Right lobe of liver (tissue), 6 donors: ENCODE measurements at regions of chr17 and their contacts with region 1.

Region 1: GRCh38 chr17:19554377-19554776 is 20.7 kb downstream of the SLC47A1 start:
- DNase-seq: no peak
- ATAC-seq: peak in 2 of 4 donors; percentile 4 to 23
- H3K4me3 ChIP-seq: no peak overlapping the region
- H3K27ac ChIP-seq: peak overlapping the region; percentile 50 to 100 (median 63)
- H3K4me1 ChIP-seq: peaks cover 0 to 43% (median 15%) of the 10 kb centered on the region in 4 donors
- H3K27me3 ChIP-seq: no peaks in the 10 kb centered on the region
- CTCF ChIP-seq: no peak
- POLR2A ChIP-seq: no peak

Region 2: DNA sequence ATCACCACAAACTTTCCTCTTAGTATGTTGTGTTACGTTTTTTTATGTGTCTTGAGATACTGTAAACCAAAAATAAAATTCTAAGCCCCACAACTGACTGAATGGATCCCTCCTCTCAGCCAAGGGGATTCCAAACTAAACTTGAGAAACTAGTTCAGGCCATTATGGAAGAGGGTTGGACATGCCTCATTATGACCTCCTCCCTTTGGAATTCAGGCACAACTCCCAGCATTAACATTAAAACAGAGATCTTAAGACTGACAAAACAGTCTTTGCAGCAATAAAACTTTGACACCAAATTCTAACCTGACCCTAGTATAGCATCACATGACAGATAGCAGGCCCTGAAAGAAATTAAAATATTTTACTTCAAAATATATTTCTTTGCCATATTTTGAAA is 71.8 kb before region 1 on chr17:
- intact Hi-C with region 1: no loop called
- DNase-seq: no peak
- ATAC-seq: no peak
- H3K4me3 ChIP-seq: no peak overlapping the region
- H3K27ac ChIP-seq: no peak overlapping the region
- H3K4me1 ChIP-seq: no peaks in the 10 kb centered on the region
- H3K27me3 ChIP-seq: no peaks in the 10 kb centered on the region
- CTCF ChIP-seq: no peak
- POLR2A ChIP-seq: no peak

Region 3: GRCh38 chr17:19648475-19649406 is 94.4 kb after region 1 on chr17 and contains the start of gene ALDH3A2:
- intact Hi-C with region 1: loop called in 1 of 2 experiments (anchors 10 kb)
- DNase-seq: peak; percentile 99
- ATAC-seq: peak; percentile 81 to 93 (median 85)
- H3K4me3 ChIP-seq: peak within 1 kb of the TSS; percentile 59 to 76 (median 68)
- H3K27ac ChIP-seq: peak within 1 kb of the TSS; percentile 90 to 97 (median 96)
- H3K4me1 ChIP-seq: peaks cover 0 to 45% (median 16%) of the 10 kb centered on the region in 4 donors
- H3K27me3 ChIP-seq: no peaks in the 10 kb centered on the region
- CTCF ChIP-seq: peak in 3 of 4 donors; percentile 5 to 40 (median 23)
- POLR2A ChIP-seq: peak; percentile 95
- total RNA-seq, gene ALDH3A2: 102 to 264 (median 182) TPM

Region 4: GRCh38 chr17:19762515-19762961 is 208.2 kb after region 1 on chr17:
- intact Hi-C with region 1: no loop called
- DNase-seq: peak in 2 of 3 donors; percentile 70 to 77
- ATAC-seq: peak; percentile 58 to 77 (median 72)
- H3K4me3 ChIP-seq: no peak overlapping the region
- H3K27ac ChIP-seq: no peak overlapping the region
- H3K4me1 ChIP-seq: peaks cover 0 to 6% (median 2%) of the 10 kb centered on the region in 4 donors
- H3K27me3 ChIP-seq: no peaks in the 10 kb centered on the region
- CTCF ChIP-seq: peak; percentile 42 to 70 (median 57)
- POLR2A ChIP-seq: no peak